ENCODE measurements at regions of chr19 and their contacts with region 1.

Region 1: DNA sequence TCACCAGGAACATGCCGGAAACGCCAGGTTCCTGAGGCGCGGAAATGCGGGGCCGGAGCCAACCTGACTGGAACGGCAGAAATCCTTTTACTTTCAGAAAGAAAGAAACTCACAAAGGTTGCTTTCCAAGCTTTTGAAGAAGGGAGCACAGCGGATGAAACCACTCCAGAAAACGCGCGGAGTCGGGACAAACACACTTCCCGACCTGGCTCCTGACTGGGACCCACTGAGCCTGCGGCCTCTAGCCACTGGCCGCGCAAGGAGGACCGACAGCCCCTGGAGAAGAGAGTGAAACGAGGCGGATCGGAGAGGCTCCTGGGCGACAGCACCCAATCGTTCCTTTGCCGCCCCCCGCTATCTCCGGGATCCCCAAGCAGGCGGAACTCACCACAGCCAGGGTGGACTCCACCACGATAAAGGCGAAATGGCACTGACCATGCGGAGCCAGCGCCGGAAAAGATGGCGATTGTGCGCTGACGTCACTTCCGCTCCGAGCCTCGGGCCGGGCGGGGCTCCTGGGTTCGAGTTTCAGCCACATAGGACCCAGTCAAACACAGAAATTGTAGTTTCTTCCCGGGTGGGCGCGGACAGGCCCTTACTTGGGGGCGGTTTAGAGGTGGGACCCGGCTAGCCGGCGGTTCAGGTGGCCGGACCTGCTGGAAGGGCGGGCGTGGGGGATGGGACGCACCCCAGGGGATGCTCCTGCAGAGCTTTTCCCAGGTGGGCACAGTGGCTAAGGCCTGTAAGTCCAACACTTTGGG is at the start of gene ZNF121:
- DNase-seq: peak; percentile 76
- H3K4me3 Mint-ChIP-seq: peak within 1 kb of the TSS; percentile 93
- H3K27ac Mint-ChIP-seq: peak within 1 kb of the TSS; percentile 94
- H3K4me1 Mint-ChIP-seq: peaks cover 24% of the 10 kb centered on the region
- H3K27me3 Mint-ChIP-seq: no peaks in the 10 kb centered on the region
- total RNA-seq, gene ZNF121: 63.4 and 64.8 TPM in 2 replicates

Region 2: DNA sequence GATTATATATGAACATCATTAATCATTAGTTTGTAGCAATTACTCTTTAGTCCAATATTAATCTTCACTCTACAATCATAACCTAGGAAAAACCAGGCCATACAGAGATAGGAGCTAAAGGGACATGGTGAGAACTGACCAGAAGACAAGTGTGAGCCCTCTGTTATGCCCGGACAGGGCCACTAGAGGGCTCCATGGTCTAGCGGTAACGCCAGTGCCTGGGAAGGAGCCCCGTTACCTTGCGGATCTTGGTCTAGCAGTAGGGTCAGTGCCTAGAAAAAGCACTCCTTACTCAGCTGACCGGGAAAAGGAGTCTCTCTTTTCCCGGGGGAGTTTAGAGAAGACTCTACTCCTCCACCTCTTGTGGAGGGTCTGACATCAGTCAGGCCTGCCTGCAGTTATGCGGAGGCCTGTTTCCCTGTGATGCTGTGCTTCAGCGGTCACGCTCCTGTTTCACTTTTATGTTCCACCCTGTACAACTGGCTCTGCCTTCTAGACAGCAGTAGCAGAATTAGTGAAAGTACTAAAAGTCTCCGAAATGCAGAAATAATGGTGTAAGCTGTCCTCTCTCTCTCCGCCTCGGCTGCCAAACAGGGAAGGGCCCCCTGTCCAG is 378.6 kb before region 1 on chr19:
- intact Hi-C with region 1: loop called (anchors 1 kb)
- DNase-seq: peak; percentile 52
- H3K4me3 Mint-ChIP-seq: peak overlapping the region; percentile 37
- H3K27ac Mint-ChIP-seq: no peak overlapping the region
- H3K4me1 Mint-ChIP-seq: peaks cover 6% of the 10 kb centered on the region
- H3K27me3 Mint-ChIP-seq: no peaks in the 10 kb centered on the region

Region 3: GRCh38 chr19:9435279-9436268 is 148.7 kb before region 1 on chr19 and contains the start of gene ZNF266:
- intact Hi-C with region 1: loop called (anchors 2 kb)
- DNase-seq: peak; percentile 88
- H3K4me3 Mint-ChIP-seq: peak within 1 kb of the TSS; percentile 94
- H3K27ac Mint-ChIP-seq: peak within 1 kb of the TSS; percentile 97
- H3K4me1 Mint-ChIP-seq: peaks cover 29% of the 10 kb centered on the region
- H3K27me3 Mint-ChIP-seq: no peaks in the 10 kb centered on the region
- total RNA-seq, gene ZNF266: 25.3 and 28.2 TPM in 2 replicates

Region 4: DNA sequence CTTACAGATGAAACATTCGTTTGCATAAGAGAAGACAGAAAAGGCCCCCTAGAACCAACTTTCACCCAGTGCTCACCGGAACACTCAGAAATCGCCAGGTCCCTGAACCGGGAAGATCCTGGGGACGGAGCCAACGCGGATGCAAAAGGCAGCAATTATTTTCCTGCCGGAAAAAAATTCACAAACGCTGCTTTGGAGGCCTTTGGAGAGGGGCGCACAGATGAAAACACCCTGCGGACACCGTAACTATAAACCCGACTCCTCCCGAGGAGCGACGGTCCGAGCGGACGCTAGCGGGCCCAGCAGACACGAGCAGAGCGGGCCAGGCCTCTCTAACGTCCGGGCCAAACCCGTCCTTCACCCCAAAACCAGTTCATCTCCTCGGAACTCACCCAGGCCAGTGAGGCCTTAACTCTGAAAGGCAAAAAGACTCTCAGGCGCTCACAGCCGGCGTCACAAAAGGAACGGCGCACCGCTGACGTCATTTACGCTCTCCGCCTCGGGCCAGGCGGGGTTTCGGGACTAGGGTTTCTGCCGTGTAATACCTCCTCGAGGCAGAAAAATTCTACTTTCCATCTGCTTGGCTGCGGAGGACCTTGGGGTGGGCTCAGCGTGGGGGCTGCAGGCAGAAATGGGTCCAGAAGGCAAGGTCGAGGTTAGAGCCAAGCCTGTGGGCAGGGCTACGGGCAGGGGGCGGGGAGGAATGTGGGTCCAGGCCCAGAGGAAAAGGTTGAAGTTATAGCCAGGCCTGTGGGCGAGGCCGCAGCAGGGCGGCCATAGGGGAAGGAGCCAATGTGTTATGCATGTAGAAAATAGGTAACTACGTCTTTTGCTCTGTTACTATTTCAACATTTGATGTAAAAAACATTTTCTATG is 45.8 kb before region 1 on chr19 and contains the start of gene ZNF426:
- intact Hi-C with region 1: loop called (anchors 1 kb)
- DNase-seq: peak; percentile 76
- H3K4me3 Mint-ChIP-seq: peak within 1 kb of the TSS; percentile 97
- H3K27ac Mint-ChIP-seq: peak within 1 kb of the TSS; percentile 98
- H3K4me1 Mint-ChIP-seq: peaks cover 5% of the 10 kb centered on the region
- H3K27me3 Mint-ChIP-seq: no peaks in the 10 kb centered on the region
- total RNA-seq, gene ZNF426: 10.2 and 10.3 TPM in 2 replicates

Region 5: DNA sequence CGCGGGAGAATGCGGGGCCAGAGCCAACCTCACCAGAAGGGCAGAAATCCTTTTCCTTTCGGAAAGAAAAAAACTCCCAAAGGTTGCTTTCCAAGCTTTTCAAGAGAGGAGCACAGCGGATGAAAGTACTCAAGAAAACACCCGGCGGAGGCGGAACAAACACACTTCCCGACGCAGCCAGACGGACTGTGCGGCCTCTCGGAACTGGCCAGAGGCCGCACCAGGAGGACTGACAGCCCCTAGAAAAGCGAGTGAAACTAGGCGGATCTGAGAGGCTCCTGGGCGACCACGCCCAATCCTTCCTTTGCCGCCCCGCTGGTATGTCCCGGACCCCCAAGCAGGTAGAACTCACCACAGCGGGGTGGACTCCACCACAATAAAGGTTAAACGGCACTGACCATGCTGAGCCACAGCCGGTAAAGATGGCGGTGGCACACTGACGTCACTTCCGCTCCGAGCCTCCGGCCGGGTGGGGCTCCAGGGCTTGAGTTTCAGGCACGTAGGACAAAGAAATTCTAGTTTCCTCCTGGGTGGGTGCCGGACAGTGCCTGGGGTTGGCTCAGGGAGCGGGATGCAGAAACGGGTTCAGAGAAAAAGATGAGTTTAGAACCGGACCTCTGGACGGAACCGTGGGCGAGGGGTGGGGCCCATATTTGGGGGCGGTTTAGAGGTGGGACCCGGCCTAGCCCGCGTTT is 90.6 kb after region 1 on chr19 and contains the start of gene ZNF562:
- intact Hi-C with region 1: loop called (anchors 10 kb)
- DNase-seq: peak; percentile 63
- H3K4me3 Mint-ChIP-seq: peak within 1 kb of the TSS; percentile 89
- H3K27ac Mint-ChIP-seq: peak within 1 kb of the TSS; percentile 95
- H3K4me1 Mint-ChIP-seq: peaks cover 21% of the 10 kb centered on the region
- H3K27me3 Mint-ChIP-seq: no peaks in the 10 kb centered on the region
- total RNA-seq, gene ZNF562: 13.2 and 13.8 TPM in 2 replicates

Region 6: GRCh38 chr19:9914315-9915207 is 330.3 kb after region 1 on chr19:
- intact Hi-C with region 1: loop called (anchors 10 kb)
- DNase-seq: peak; percentile 69
- H3K4me3 Mint-ChIP-seq: peak overlapping the region; percentile 52
- H3K27ac Mint-ChIP-seq: no peak overlapping the region
- H3K4me1 Mint-ChIP-seq: peaks cover 17% of the 10 kb centered on the region
- H3K27me3 Mint-ChIP-seq: peaks cover 21% of the 10 kb centered on the region

Measured in activated T-helper 1 cell treated with anti-CD3 and anti-CD28 coated beads, Interleukin-12 subunit alpha, Interleukin-12 subunit beta, Interleukin-2, Interleukin-4 antibody, amounts not matched to agents 30 ng/mL and 10 ng/mL and 1 ng/mL, durations not matched to agents 14 hours and 24 hours and 36 hours (primary cell).